CD8-positive, alpha-beta T cell (primary cell): ENCODE measurements at regions of chr17 and their contacts with region 1.

Region 1: GRCh38 chr17:63848834-63849700 is 6.6 kb upstream of the SMARCD2 start:
- DNase-seq: peak; percentile 88 to 97 (median 95)
- ATAC-seq: peak; percentile 98
- H3K4me3 ChIP-seq: peak overlapping the region; percentile 34 to 55
- H3K4me3 Mint-ChIP-seq: peak overlapping the region; percentile 81
- H3K27ac ChIP-seq: peak overlapping the region; percentile 23 to 81
- H3K27ac Mint-ChIP-seq: peak overlapping the region; percentile 90
- H3K4me1 ChIP-seq: peaks cover 12% of the 10 kb centered on the region
- H3K4me1 Mint-ChIP-seq: peaks cover 17% of the 10 kb centered on the region
- H3K27me3 ChIP-seq: no peaks in the 10 kb centered on the region
- H3K27me3 Mint-ChIP-seq: no peaks in the 10 kb centered on the region
- CTCF ChIP-seq: peak; percentile 73

Region 2: DNA sequence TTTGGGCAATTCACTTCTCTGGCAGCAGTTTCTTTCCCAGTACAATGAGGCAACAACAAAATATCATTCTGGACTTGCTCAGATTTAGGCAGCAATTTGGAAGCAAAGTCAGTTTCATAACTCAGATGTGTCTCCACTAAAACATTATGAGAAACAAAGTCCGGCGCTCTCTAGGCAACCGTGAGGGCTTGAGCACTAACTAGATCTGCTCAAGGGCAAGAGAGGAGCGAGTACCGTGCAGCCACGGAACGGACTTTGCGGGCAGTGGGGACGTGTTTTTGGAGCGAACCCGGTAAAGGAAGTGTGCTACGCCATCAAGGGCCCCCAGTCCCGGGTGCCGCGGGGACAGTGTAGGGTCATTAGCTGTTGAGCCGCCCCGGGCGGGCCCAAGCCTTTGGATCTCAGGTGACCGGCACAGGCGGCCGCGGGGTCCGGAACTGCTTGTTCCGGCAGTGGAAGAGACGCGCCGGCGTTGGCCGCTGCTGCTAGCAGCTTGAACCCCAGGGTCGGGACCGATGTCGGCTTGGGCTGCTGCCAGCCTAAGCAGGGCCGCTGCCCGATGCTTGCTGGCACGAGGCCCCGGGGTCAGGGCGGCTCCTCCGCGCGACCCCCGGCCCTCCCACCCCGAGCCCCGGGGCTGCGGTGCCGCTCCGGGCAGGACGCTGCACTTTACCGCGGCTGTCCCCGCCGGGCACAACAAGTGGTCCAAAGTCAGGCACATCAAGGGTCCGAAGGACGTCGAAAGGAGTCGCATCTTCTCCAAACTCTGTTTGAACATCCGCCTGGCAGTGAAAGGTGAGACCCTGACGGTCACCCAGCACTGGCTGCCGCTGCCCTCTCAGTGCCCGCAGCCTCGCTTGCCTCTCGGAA is 248.3 kb before region 1 on chr17 and contains the start of gene TACO1:
- CTCF ChIA-PET with region 1: no interaction called
- POLR2A ChIA-PET with region 1: no interaction called
- intact Hi-C with region 1: no loop called
- DNase-seq: peak; percentile 62 to 87 (median 76)
- ATAC-seq: peak; percentile 82
- H3K4me3 ChIP-seq: peak within 1 kb of the TSS; percentile 69 to 99
- H3K4me3 Mint-ChIP-seq: peak within 1 kb of the TSS; percentile 96
- H3K27ac ChIP-seq: peak within 1 kb of the TSS; percentile 64 to 80
- H3K27ac Mint-ChIP-seq: peak within 1 kb of the TSS; percentile 95
- H3K4me1 ChIP-seq: peaks cover 22% of the 10 kb centered on the region
- H3K4me1 Mint-ChIP-seq: peaks cover 49% of the 10 kb centered on the region
- H3K27me3 ChIP-seq: no peaks in the 10 kb centered on the region
- H3K27me3 Mint-ChIP-seq: no peaks in the 10 kb centered on the region
- CTCF ChIP-seq: no peak
- total RNA-seq, gene TACO1: 13.7 to 15.9 TPM

Region 3: DNA sequence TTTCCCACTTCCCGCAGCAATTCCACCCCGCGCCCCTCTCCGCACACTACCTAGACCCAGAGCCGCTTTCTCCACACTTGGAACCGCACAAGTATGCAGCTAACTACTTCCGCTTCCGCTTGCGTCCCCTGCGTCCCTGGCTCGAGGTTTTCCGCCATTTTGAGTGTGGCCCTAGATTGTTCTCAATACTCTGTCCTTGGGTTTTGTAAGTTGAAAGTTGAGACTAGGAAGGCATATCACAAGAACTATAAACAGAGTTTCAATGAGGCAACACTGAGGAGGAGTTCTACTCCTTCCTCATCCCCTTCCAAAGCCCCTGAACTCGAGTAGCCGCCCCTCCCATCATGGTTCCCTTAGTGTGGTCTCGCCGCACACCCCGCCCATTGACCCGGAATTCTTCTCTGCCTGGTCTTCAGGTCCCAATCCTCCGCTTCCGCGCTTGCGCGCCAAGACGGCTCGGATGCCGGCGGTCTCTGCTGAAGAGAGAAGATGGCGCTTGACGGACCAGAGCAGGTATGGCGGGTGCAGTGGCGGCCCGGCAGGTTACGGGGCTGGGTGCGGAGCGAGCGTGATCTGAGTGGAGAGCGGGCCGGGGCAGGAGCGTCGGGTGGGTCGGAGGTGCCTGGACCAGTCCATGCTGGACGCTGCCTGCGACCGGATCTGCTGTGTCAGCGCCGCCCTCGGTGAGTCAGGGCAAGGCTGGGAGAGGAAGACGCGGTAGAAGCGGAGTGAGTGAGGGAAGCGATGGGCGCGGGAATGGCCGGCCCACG is 21.9 kb before region 1 on chr17 and contains the starts of genes FTSJ3 and PSMC5:
- CTCF ChIA-PET with region 1: interaction called, 21 read pairs
- POLR2A ChIA-PET with region 1: interaction called, 5 read pairs
- intact Hi-C with region 1: no loop called
- DNase-seq: peak; percentile 91 to 99 (median 95)
- ATAC-seq: peak; percentile 92
- H3K4me3 ChIP-seq: peak within 1 kb of the TSS; percentile 74 to 75
- H3K4me3 Mint-ChIP-seq: peak within 1 kb of the TSS; percentile 100
- H3K27ac ChIP-seq: peak within 1 kb of the TSS; percentile 66 to 96
- H3K27ac Mint-ChIP-seq: peak within 1 kb of the TSS; percentile 98
- H3K4me1 ChIP-seq: peaks cover 56% of the 10 kb centered on the region
- H3K4me1 Mint-ChIP-seq: peaks cover 81% of the 10 kb centered on the region
- H3K27me3 ChIP-seq: no peaks in the 10 kb centered on the region
- H3K27me3 Mint-ChIP-seq: no peaks in the 10 kb centered on the region
- CTCF ChIP-seq: peak; percentile 51
- total RNA-seq, gene FTSJ3: 60.0 to 70.3 TPM
- total RNA-seq, gene PSMC5: 88.5 to 90.3 TPM

Region 4: GRCh38 chr17:63859257-63859656 is 10.2 kb after region 1 on chr17:
- CTCF ChIA-PET with region 1: interaction called, 14 read pairs
- POLR2A ChIA-PET with region 1: interaction called, 6 read pairs
- intact Hi-C with region 1: no loop called
- DNase-seq: no peak
- ATAC-seq: no peak
- H3K4me3 ChIP-seq: no peak overlapping the region
- H3K4me3 Mint-ChIP-seq: no peak overlapping the region
- H3K27ac ChIP-seq: no peak overlapping the region
- H3K27ac Mint-ChIP-seq: no peak overlapping the region
- H3K4me1 ChIP-seq: no peaks in the 10 kb centered on the region
- H3K4me1 Mint-ChIP-seq: no peaks in the 10 kb centered on the region
- H3K27me3 ChIP-seq: no peaks in the 10 kb centered on the region
- H3K27me3 Mint-ChIP-seq: peaks cover 2% of the 10 kb centered on the region
- CTCF ChIP-seq: no peak

Region 5: GRCh38 chr17:63881876-63882601 is 33.0 kb after region 1 on chr17 and contains the start of gene GH2:
- CTCF ChIA-PET with region 1: no interaction called
- POLR2A ChIA-PET with region 1: no interaction called
- intact Hi-C with region 1: no loop called
- DNase-seq: peak; percentile 28 to 76 (median 60)
- ATAC-seq: peak; percentile 99
- H3K4me3 ChIP-seq: no peak within 1 kb of the TSS
- H3K4me3 Mint-ChIP-seq: no peak within 1 kb of the TSS
- H3K27ac ChIP-seq: no peak within 1 kb of the TSS
- H3K27ac Mint-ChIP-seq: no peak within 1 kb of the TSS
- H3K4me1 ChIP-seq: no peaks in the 10 kb centered on the region
- H3K4me1 Mint-ChIP-seq: peaks cover 4% of the 10 kb centered on the region
- H3K27me3 ChIP-seq: no peaks in the 10 kb centered on the region
- H3K27me3 Mint-ChIP-seq: peaks cover 2% of the 10 kb centered on the region
- CTCF ChIP-seq: peak; percentile 63
- total RNA-seq, gene GH2: not detected

Region 6: DNA sequence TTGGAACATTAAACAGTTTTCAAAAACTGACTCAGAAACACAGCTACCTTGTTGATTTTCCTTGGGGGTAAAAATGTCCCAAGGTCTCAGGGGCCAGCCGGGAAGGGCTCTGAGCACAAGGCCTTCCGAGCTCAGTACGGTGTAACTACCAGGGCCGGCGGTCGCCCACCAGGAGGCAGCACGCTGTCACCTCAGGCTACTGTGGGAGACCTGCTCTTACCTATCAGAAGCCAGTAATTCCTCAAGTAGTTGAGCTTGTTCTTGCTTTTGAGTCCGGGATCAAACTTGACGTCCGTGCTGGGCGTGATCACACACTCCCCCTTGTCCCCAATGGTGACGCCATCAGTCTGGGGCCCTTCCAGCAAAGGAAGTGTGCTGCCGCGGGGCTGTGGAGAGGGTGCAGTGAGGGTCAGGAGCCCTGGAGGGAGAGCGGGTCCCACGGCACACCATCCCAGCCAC is 214.7 kb after region 1 on chr17:
- CTCF ChIA-PET with region 1: no interaction called
- POLR2A ChIA-PET with region 1: no interaction called
- intact Hi-C with region 1: no loop called
- DNase-seq: peak; percentile 20 to 73 (median 56)
- ATAC-seq: peak; percentile 54
- H3K4me3 ChIP-seq: no peak overlapping the region
- H3K4me3 Mint-ChIP-seq: peak overlapping the region; percentile 76
- H3K27ac ChIP-seq: peak overlapping the region in 1 of 2 experiments; percentile 58
- H3K27ac Mint-ChIP-seq: peak overlapping the region; percentile 86
- H3K4me1 ChIP-seq: peaks cover 32% of the 10 kb centered on the region
- H3K4me1 Mint-ChIP-seq: peaks cover 75% of the 10 kb centered on the region
- H3K27me3 ChIP-seq: no peaks in the 10 kb centered on the region
- H3K27me3 Mint-ChIP-seq: no peaks in the 10 kb centered on the region
- CTCF ChIP-seq: peak; percentile 33